ENCODE measurements at regions of chr14 and their contacts with region 1.

Region 1: GRCh38 chr14:21039585-21040369 is 2.4 kb upstream of the RNASE7 start:
- DNase-seq: peak in 7 of 9 donors; percentile 17 to 55 (median 46)
- ATAC-seq: peak; percentile 69
- H3K4me3 ChIP-seq: no peak overlapping the region
- H3K4me3 Mint-ChIP-seq: no peak overlapping the region
- H3K27ac ChIP-seq: no peak overlapping the region
- H3K27ac Mint-ChIP-seq: no peak overlapping the region
- H3K4me1 ChIP-seq: no peaks in the 10 kb centered on the region
- H3K4me1 Mint-ChIP-seq: peaks cover 2 to 9% (median 8%) of the 10 kb centered on the region in 7 donors
- H3K27me3 ChIP-seq: no peaks in the 10 kb centered on the region
- H3K27me3 Mint-ChIP-seq: peaks cover 3 to 31% (median 11%) of the 10 kb centered on the region in 5 donors

Region 2: DNA sequence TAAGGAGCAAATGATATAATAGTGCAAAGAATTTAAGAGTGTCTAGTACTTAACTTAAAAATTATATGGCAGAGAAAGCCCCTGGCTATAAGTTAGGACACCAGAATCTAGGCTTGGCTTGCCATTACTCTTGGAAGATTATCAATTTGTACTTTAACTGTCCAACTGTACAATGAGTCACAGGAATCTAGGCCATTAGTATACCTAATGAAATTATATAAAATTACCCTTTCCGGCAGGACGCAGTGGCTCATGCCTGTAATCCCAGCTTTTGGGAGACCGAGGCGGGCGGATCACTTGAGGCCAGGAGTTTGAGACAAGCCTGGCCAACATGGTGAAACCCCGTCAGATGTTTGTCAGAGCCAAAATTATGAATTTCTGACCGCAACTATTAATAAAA is 397.6 kb before region 1 on chr14:
- CTCF ChIA-PET with region 1: no interaction called
- POLR2A ChIA-PET with region 1: no interaction called
- intact Hi-C with region 1: no loop called
- DNase-seq: no peak
- ATAC-seq: no peak
- H3K4me3 ChIP-seq: no peak overlapping the region
- H3K4me3 Mint-ChIP-seq: no peak overlapping the region
- H3K27ac ChIP-seq: no peak overlapping the region
- H3K27ac Mint-ChIP-seq: no peak overlapping the region
- H3K4me1 ChIP-seq: no peaks in the 10 kb centered on the region
- H3K4me1 Mint-ChIP-seq: no peaks in the 10 kb centered on the region
- H3K27me3 ChIP-seq: no peaks in the 10 kb centered on the region
- H3K27me3 Mint-ChIP-seq: peaks cover 18 to 51% (median 28%) of the 10 kb centered on the region in 5 donors

Region 3: DNA sequence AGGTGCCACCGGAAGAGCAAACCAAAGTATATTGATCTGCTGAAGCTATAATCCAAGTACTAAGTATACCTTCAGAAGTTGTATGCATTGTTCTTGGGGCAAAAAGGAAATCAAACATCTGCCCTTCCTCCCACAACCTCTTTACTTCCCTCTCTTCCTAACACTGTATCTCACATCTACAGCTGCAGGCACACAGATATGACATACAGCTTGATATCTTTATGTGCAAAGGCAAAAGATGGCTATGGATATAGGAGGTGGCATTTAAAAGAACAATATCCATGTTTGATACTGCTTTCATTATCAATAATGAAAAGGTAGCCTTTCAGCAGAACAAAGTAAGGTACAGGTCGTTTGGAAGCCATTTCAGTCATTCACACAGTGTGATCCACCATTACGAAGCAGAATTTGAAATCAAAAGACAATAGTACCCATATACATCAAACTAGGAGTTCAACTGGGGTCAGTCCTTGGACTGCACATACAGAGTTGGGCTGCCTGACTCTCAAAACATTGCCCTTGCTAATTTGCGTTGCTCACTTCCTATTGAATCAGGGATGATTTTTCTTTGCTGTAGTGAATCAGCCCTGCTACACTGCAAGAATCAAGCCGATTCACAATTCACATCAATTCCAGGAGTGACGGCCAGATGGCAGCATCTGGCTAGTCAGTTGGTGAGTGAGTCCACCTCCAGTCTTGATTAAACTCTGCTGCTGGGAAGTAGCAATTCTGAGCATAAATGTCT is 342.3 kb before region 1 on chr14:
- CTCF ChIA-PET with region 1: no interaction called
- POLR2A ChIA-PET with region 1: no interaction called
- intact Hi-C with region 1: loop called in 1 of 2 experiments (anchors 5 kb)
- DNase-seq: peak; percentile 36 to 67 (median 57)
- ATAC-seq: peak; percentile 89
- H3K4me3 ChIP-seq: no peak overlapping the region
- H3K4me3 Mint-ChIP-seq: no peak overlapping the region
- H3K27ac ChIP-seq: no peak overlapping the region
- H3K27ac Mint-ChIP-seq: no peak overlapping the region
- H3K4me1 ChIP-seq: no peaks in the 10 kb centered on the region
- H3K4me1 Mint-ChIP-seq: peaks cover 0 to 1% (median 0%) of the 10 kb centered on the region in 7 donors
- H3K27me3 ChIP-seq: no peaks in the 10 kb centered on the region
- H3K27me3 Mint-ChIP-seq: peaks cover 0 to 15% (median 0%) of the 10 kb centered on the region in 5 donors

Region 4: GRCh38 chr14:21092273-21093011 is 52.7 kb after region 1 on chr14:
- CTCF ChIA-PET with region 1: no interaction called
- POLR2A ChIA-PET with region 1: no interaction called
- intact Hi-C with region 1: loop called in 1 of 2 experiments (anchors 2 kb)
- DNase-seq: peak; percentile 82 to 98 (median 93)
- ATAC-seq: peak; percentile 90
- H3K4me3 ChIP-seq: no peak overlapping the region
- H3K4me3 Mint-ChIP-seq: peak overlapping the region in 1 of 10 donors; percentile 6
- H3K27ac ChIP-seq: no peak overlapping the region
- H3K27ac Mint-ChIP-seq: peak overlapping the region in 8 of 9 donors; percentile 17 to 88 (median 78)
- H3K4me1 ChIP-seq: peaks cover 6 to 14% of the 10 kb centered on the region in 2 donors
- H3K4me1 Mint-ChIP-seq: peaks cover 15 to 37% (median 27%) of the 10 kb centered on the region in 7 donors
- H3K27me3 ChIP-seq: no peaks in the 10 kb centered on the region
- H3K27me3 Mint-ChIP-seq: peaks cover 0 to 17% (median 0%) of the 10 kb centered on the region in 5 donors

Measured in naive thymus-derived CD4-positive, alpha-beta T cell (primary cell).